Naive thymus-derived CD4-positive, alpha-beta T cell (primary cell): ENCODE measurements at regions of chr16 and their contacts with region 1.

Region 1: DNA sequence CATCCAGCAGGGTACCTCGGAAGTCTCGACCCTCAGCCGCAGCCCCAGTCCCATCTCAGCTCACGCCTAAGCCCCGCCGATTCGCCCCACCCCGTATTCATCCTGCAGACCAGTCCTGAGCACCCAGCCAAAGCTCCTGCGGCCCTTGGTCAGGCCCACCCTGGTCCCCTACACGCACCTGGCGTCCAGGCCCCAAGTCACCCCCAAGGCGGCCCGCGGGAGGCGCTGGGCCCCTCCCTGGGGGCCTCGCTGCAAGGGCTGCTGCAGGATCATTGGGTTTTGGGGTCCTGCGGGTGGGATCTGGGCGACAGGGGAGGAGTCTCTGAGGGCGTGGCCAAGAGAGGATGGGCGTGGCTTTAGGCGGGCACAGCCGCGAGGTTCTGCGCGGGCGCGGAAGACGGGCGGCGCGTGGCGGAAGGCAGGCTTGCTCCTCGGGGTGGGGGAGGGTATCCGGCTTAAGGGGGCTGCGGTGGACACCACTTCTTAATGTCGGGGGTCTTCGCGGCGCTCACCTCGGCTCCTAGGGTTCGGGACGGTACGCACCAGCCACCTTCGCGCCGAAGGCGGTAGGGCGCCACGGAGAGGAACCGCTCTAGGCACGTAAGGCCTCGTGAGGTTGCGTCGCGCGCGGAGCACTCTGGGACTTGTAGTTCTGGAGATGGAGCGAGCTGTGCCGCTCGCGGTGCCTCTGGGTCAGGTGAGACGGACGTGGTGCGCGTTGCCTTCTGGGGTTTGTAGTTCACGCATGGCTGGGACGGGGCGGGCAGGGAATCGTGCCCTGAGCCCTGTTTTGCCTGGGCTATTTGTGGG is at the starts of genes HCFC1R1 and THOC6:
- DNase-seq: peak; percentile 86 to 96 (median 96)
- ATAC-seq: peak; percentile 89
- H3K4me3 ChIP-seq: peak within 1 kb of the TSS; percentile 87
- H3K4me3 Mint-ChIP-seq: peak within 1 kb of the TSS; percentile 78 to 98 (median 92)
- H3K27ac ChIP-seq: peak within 1 kb of the TSS; percentile 98
- H3K27ac Mint-ChIP-seq: peak within 1 kb of the TSS; percentile 85 to 99 (median 96)
- H3K4me1 ChIP-seq: peaks cover 42 to 50% of the 10 kb centered on the region in 2 donors
- H3K4me1 Mint-ChIP-seq: peaks cover 15 to 62% (median 50%) of the 10 kb centered on the region in 7 donors
- H3K27me3 ChIP-seq: peaks cover 0 to under 1% of the 10 kb centered on the region in 2 donors
- H3K27me3 Mint-ChIP-seq: peaks cover 0 to 5% (median 2%) of the 10 kb centered on the region in 5 donors
- total RNA-seq, gene HCFC1R1: 11.5 to 29.6 (median 14.9) TPM
- total RNA-seq, gene THOC6: 25.3 to 55.5 (median 26.0) TPM

Region 2: DNA sequence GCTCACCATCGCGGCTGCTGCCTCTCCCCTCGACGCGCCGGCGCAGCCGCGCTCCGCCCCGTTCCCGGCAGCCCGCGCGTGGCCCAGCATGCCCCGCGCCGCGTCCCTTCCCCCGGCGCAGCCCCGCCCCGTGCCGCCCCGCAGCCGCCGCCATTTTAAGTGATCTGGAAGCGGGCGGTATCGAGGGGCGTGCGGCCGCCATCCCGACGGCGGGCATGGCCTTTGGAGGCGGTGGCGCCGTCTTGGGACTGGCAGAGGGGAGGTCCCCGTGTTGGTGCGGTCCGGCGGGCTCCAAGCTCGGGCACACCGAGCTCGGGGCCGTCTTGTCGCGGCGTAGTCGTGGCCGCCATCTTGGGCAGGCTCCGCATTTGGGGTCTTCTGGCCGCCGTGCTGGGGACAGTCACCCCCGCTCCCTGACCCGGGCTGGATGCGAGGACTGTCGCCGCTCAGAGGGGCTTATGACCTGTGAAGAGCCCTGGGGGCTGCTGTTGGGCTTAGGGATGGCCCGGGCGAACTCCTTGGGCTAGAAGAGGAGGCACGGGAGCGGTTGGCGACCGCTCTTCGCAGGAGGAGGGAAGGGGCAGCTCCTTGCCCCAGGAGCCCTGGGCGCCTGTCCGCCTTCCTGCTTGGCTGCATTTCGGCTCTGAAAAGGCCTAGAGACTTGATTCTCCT is 246.5 kb before region 1 on chr16 and contains the start of gene ELOB:
- CTCF ChIA-PET with region 1: no interaction called
- POLR2A ChIA-PET with region 1: no interaction called
- intact Hi-C with region 1: loop called in 1 of 2 experiments (anchors 1 kb)
- DNase-seq: peak; percentile 81 to 95 (median 90)
- ATAC-seq: peak; percentile 95
- H3K4me3 ChIP-seq: peak within 1 kb of the TSS; percentile 93
- H3K4me3 Mint-ChIP-seq: peak within 1 kb of the TSS; percentile 93 to 97 (median 96)
- H3K27ac ChIP-seq: peak within 1 kb of the TSS; percentile 99
- H3K27ac Mint-ChIP-seq: peak within 1 kb of the TSS; percentile 96 to 99 (median 98)
- H3K4me1 ChIP-seq: peaks cover 19 to 24% of the 10 kb centered on the region in 2 donors
- H3K4me1 Mint-ChIP-seq: peaks cover 20 to 55% (median 38%) of the 10 kb centered on the region in 7 donors
- H3K27me3 ChIP-seq: no peaks in the 10 kb centered on the region
- H3K27me3 Mint-ChIP-seq: no peaks in the 10 kb centered on the region
- total RNA-seq, gene ELOB: 65.3 to 242 (median 99.3) TPM

Region 3: GRCh38 chr16:2911580-2912329 is 112.1 kb before region 1 on chr16 and contains the start of gene FLYWCH1:
- CTCF ChIA-PET with region 1: no interaction called
- POLR2A ChIA-PET with region 1: no interaction called
- intact Hi-C with region 1: loop called in 1 of 2 experiments (anchors 5 kb)
- DNase-seq: peak; percentile 94 to 99 (median 97)
- ATAC-seq: peak; percentile 99
- H3K4me3 ChIP-seq: peak within 1 kb of the TSS; percentile 85
- H3K4me3 Mint-ChIP-seq: peak within 1 kb of the TSS; percentile 80 to 97 (median 92)
- H3K27ac ChIP-seq: peak within 1 kb of the TSS; percentile 78
- H3K27ac Mint-ChIP-seq: peak within 1 kb of the TSS; percentile 80 to 96 (median 87)
- H3K4me1 ChIP-seq: peaks cover 7 to 8% of the 10 kb centered on the region in 2 donors
- H3K4me1 Mint-ChIP-seq: peaks cover 11 to 39% (median 30%) of the 10 kb centered on the region in 7 donors
- H3K27me3 ChIP-seq: no peaks in the 10 kb centered on the region
- H3K27me3 Mint-ChIP-seq: peaks cover 0 to 10% (median 0%) of the 10 kb centered on the region in 5 donors
- total RNA-seq, gene FLYWCH1: 48.6 to 149 (median 87.0) TPM

Region 4: GRCh38 chr16:3003582-3004302 is 20.1 kb before region 1 on chr16:
- CTCF ChIA-PET with region 1: interaction called, 90 read pairs
- POLR2A ChIA-PET with region 1: interaction called, 17 read pairs
- intact Hi-C with region 1: loop called (anchors 1 kb)
- DNase-seq: peak; percentile 78 to 98 (median 96)
- ATAC-seq: peak; percentile 99
- H3K4me3 ChIP-seq: no peak overlapping the region
- H3K4me3 Mint-ChIP-seq: peak overlapping the region; percentile 76 to 82 (median 80)
- H3K27ac ChIP-seq: no peak overlapping the region
- H3K27ac Mint-ChIP-seq: peak overlapping the region in 5 of 9 donors; percentile 41 to 81 (median 45)
- H3K4me1 ChIP-seq: peaks cover 19 to 21% of the 10 kb centered on the region in 2 donors
- H3K4me1 Mint-ChIP-seq: peaks cover 18 to 32% (median 25%) of the 10 kb centered on the region in 7 donors
- H3K27me3 ChIP-seq: no peaks in the 10 kb centered on the region
- H3K27me3 Mint-ChIP-seq: peaks cover 0 to 17% (median 0%) of the 10 kb centered on the region in 5 donors

Region 5: DNA sequence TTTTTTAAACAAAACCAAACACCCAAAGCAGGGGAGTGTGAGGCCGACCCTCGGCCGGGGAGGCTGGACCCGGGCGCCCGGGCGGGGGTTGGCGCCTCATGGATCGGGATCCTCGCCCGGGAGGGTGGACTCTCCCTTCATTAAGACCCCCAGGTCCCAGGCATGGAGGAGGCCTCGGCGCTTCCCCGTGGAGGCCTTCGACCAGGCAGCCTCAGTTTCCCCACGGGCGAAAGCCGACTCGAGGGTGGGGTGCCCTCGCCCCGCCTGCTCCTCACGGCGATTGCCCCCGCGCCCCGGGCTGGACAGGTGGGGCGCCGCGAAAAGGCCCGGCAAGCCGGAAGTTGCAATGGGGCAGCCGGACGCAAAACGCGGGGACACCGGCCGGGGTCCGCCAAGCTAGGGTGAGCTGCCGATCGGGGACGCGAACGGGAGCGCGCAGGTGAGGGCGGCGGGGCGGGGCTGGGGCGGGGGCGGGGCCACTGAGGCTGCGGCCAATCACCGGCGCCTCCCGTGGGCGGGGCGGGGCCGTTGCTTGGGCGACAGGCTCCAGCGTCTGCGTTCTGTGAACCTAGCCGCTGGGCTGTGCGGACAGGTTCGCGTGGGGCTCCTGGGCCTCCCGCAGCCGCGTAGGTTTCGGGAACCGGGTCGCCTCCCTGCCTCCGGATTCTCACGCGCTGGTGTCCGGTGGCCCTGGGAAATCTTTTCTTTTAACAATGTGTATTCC is 82.5 kb after region 1 on chr16:
- CTCF ChIA-PET with region 1: no interaction called
- POLR2A ChIA-PET with region 1: interaction called, 3 read pairs
- intact Hi-C with region 1: loop called in 1 of 2 experiments (anchors 2 kb)
- DNase-seq: peak; percentile 77 to 92 (median 85)
- ATAC-seq: peak; percentile 97
- H3K4me3 ChIP-seq: peak overlapping the region; percentile 76
- H3K4me3 Mint-ChIP-seq: peak overlapping the region; percentile 83 to 94 (median 87)
- H3K27ac ChIP-seq: peak overlapping the region; percentile 89
- H3K27ac Mint-ChIP-seq: peak overlapping the region; percentile 82 to 96 (median 92)
- H3K4me1 ChIP-seq: peaks cover 13 to 23% of the 10 kb centered on the region in 2 donors
- H3K4me1 Mint-ChIP-seq: peaks cover 26 to 45% (median 35%) of the 10 kb centered on the region in 7 donors
- H3K27me3 ChIP-seq: no peaks in the 10 kb centered on the region
- H3K27me3 Mint-ChIP-seq: peaks cover 0 to 7% (median 0%) of the 10 kb centered on the region in 5 donors

Region 6: DNA sequence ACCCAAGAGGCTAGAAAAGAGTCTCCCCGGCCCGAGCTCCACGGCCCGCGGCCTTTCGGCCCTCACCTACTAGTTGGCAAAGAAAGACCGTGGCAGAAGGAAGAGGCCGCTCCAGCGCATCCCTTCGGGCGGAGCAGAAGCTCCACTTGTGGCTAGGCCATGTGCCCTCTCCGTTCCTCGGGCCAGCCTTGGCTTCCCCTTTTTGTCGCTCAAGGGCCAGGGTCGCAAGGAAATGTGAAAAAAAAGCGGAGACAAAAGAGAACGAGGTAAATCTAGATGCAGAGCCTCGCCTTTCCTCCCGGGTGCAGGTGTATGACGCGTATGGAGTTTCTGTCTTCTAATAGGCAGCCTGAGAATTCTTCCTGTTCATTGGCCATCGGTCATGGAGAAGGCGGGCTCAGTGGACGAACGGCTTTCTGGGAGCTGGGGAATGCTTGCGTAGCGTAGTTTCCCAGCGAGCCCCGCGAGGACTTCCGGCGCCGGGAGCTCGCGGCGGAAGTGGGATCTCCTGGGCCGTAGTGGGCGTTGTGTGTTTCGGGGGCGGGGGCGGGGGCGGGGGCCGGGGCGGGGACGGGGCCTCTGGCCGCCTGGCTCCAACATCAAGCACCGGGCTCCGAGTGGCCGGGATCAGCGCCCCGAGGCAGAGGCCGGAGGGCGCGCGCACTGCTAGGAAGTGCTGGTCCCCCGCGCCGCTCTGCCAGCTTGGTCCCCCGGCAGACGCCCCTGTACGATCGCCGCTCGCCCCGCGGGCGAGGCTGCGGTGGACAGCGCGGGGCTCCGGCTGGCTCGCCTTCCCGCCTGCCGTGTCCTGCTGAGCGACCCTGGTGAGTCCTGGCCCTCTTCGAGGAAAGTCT is 110.9 kb after region 1 on chr16 and contains the start of gene ZNF213:
- CTCF ChIA-PET with region 1: interaction called, 98 read pairs
- POLR2A ChIA-PET with region 1: interaction called, 10 read pairs
- intact Hi-C with region 1: no loop called
- DNase-seq: peak; percentile 70 to 97 (median 95)
- ATAC-seq: peak; percentile 98
- H3K4me3 ChIP-seq: peak within 1 kb of the TSS; percentile 94
- H3K4me3 Mint-ChIP-seq: peak within 1 kb of the TSS; percentile 93 to 99 (median 96)
- H3K27ac ChIP-seq: peak within 1 kb of the TSS; percentile 93
- H3K27ac Mint-ChIP-seq: peak within 1 kb of the TSS; percentile 94 to 98 (median 97)
- H3K4me1 ChIP-seq: peaks cover 10 to 11% of the 10 kb centered on the region in 2 donors
- H3K4me1 Mint-ChIP-seq: peaks cover 12 to 45% (median 34%) of the 10 kb centered on the region in 7 donors
- H3K27me3 ChIP-seq: no peaks in the 10 kb centered on the region
- H3K27me3 Mint-ChIP-seq: no peaks in the 10 kb centered on the region
- total RNA-seq, gene ZNF213: 3.8 to 14.0 (median 11.8) TPM

Region 7: DNA sequence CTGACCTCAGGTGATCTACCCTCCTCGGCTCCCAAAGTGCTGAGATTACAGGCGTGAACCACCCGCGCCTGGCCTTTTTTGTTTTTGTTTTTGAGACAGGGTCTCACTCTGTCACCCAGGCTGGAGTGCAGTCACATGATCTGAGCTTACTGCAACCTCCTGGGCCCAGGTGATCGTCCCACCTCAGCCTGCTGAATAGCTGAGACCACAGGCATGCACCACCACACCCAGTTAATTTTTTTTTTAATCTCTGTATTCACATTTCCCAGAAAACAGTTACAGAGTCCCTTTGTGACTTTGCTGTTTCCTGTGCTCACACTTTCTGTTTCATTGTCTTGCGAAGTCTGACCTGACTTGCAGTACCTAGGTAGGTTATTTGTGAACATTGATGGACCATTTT is 479.6 kb after region 1 on chr16:
- CTCF ChIA-PET with region 1: no interaction called
- POLR2A ChIA-PET with region 1: no interaction called
- intact Hi-C with region 1: loop called in 1 of 2 experiments (anchors 5 kb)
- DNase-seq: peak in 8 of 9 donors; percentile 50 to 81 (median 70)
- ATAC-seq: peak; percentile 49
- H3K4me3 ChIP-seq: peak overlapping the region; percentile 3
- H3K4me3 Mint-ChIP-seq: peak overlapping the region; percentile 76 to 94 (median 84)
- H3K27ac ChIP-seq: peak overlapping the region; percentile 92
- H3K27ac Mint-ChIP-seq: peak overlapping the region; percentile 90 to 98 (median 95)
- H3K4me1 ChIP-seq: peaks cover 40 to 47% of the 10 kb centered on the region in 2 donors
- H3K4me1 Mint-ChIP-seq: peaks cover 37 to 80% (median 67%) of the 10 kb centered on the region in 7 donors
- H3K27me3 ChIP-seq: no peaks in the 10 kb centered on the region
- H3K27me3 Mint-ChIP-seq: no peaks in the 10 kb centered on the region